Vagina (tissue), 2 donors: ENCODE measurements at regions of chr1 and their contacts with region 1.

Region 1: DNA sequence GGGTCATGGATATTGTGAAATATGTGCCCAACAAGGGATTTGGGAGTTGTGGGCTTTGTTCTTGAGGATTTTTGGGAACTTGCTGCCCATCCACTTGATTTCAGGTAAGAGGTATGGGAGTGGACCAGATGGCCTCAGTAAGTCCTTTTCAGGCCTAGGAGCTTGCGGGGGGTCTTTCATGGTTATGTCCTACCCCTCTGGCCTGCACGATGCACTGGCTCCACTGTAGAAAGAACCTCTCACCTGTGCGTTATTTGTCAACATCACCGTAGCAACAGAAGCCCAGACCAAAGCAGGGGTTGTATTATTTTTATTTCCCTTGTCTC is 8.6 kb downstream of the RIIAD1 start:
- DNase-seq: peak in 1 of 2 donors; percentile 56
- H3K4me3 ChIP-seq: no peak overlapping the region
- H3K27ac ChIP-seq: no peak overlapping the region
- H3K4me1 ChIP-seq: no peaks in the 10 kb centered on the region
- H3K27me3 ChIP-seq: no peaks in the 10 kb centered on the region
- CTCF ChIP-seq: no peak
- POLR2A ChIP-seq: no peak

Region 2: DNA sequence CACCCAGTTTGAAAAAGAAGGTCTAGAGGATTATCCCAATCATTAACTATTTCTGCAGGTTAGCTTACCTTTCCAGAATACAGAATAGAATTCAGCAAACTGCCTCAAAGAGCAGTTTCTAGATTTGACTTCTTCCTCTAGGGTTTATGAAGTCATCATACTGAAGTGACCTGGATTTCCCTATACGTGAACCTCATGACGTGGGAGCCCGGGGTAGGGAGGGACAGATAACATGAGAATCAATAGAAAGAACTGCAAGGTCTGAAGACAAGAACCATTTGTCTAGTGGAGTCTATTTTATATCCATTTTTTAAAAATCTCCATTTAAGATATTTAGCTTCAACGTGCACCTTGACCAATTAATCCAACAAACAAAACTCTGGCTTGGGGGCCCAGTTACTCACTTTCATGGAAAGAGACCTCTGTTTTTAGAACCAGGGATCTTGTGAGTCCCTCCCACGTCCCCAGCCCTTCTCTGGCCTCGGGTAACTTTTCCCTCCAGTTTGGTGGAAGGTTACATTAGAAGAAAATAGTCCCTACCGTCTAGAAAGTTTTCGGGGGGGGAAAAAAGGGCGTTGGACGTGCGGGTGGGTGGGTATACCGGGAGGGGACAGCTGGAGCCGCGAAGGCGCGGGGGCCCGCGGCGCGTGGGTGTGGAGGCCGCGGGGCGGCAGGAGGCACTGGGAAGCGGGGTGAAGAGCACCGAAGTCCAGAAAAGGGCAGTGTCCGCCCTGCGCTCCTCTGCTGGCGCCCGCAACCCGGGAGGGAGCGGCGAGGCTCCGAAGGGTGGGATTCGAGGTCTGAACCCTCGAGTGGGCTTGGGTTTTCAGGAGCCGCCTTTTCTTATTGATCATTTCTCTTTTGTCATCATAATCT is 256.8 kb before region 1 on chr1:
- intact Hi-C with region 1: no loop called
- DNase-seq: no peak
- H3K4me3 ChIP-seq: peak overlapping the region; percentile 55 to 58
- H3K27ac ChIP-seq: peak overlapping the region; percentile 69
- H3K4me1 ChIP-seq: no peaks in the 10 kb centered on the region
- H3K27me3 ChIP-seq: no peaks in the 10 kb centered on the region
- CTCF ChIP-seq: no peak
- POLR2A ChIP-seq: no peak

Region 3: GRCh38 chr1:151594143-151594625 is 135.7 kb before region 1 on chr1:
- intact Hi-C with region 1: loop called (anchors 5 kb)
- DNase-seq: no peak
- H3K4me3 ChIP-seq: no peak overlapping the region
- H3K27ac ChIP-seq: no peak overlapping the region
- H3K4me1 ChIP-seq: no peaks in the 10 kb centered on the region
- H3K27me3 ChIP-seq: no peaks in the 10 kb centered on the region
- CTCF ChIP-seq: peak; percentile 61 to 84 (median 75)
- POLR2A ChIP-seq: no peak